IMR-90 (cell line): ENCODE measurements at regions of chr3 and their contacts with region 1.

Region 1: GRCh38 chr3:78258798-78259197 is 1218.9 kb downstream of the ROBO2 start:
- DNase-seq: peak; percentile 90
- ATAC-seq: peak; percentile 96
- H3K4me3 ChIP-seq: no peak overlapping the region
- H3K27ac ChIP-seq: peak overlapping the region; percentile 66; the same call in 1 of the 2 replicates
- H3K4me1 ChIP-seq: no peaks in the 10 kb centered on the region; the same call in none of the 2 replicates
- H3K27me3 ChIP-seq: no peaks in the 10 kb centered on the region
- CTCF ChIP-seq: no peak
- POLR2A ChIP-seq: no peak
- RAD21 ChIP-seq: no peak

Region 2: DNA sequence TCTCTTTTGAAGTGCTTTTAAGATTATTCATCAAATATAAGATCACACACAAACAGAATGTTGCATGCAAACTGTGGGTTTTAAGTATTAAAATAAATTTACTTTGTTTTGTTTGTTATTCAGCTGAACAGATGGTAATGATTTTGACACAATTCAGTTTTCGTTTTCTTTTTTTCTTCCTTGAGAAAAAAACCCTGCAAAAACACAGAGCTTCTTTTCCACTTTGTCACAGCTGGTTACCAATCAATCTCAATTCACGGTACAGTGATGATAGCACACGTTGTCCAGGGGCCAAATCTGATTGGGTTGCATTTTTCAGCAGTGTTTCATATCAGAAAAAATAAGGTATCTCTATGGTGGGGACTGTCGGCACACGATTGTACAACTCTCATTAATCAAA is 745.3 kb before region 1 on chr3:
- CTCF ChIA-PET with region 1: no interaction called
- POLR2A ChIA-PET with region 1: no interaction called
- dilution Hi-C with region 1: no loop called
- in situ Hi-C with region 1: no loop called
- intact Hi-C with region 1: no loop called
- DNase-seq: no peak
- ATAC-seq: no peak
- H3K4me3 ChIP-seq: no peak overlapping the region
- H3K27ac ChIP-seq: no peak overlapping the region
- H3K4me1 ChIP-seq: no peaks in the 10 kb centered on the region
- H3K27me3 ChIP-seq: no peaks in the 10 kb centered on the region
- CTCF ChIP-seq: no peak
- POLR2A ChIP-seq: no peak
- RAD21 ChIP-seq: no peak

Region 3: GRCh38 chr3:77780278-77780996 is 478.4 kb before region 1 on chr3:
- CTCF ChIA-PET with region 1: no interaction called
- POLR2A ChIA-PET with region 1: no interaction called
- dilution Hi-C with region 1: no loop called
- in situ Hi-C with region 1: no loop called
- intact Hi-C with region 1: no loop called
- DNase-seq: no peak
- ATAC-seq: no peak
- H3K4me3 ChIP-seq: no peak overlapping the region
- H3K27ac ChIP-seq: no peak overlapping the region
- H3K4me1 ChIP-seq: no peaks in the 10 kb centered on the region
- H3K27me3 ChIP-seq: no peaks in the 10 kb centered on the region
- CTCF ChIP-seq: no peak
- POLR2A ChIP-seq: no peak
- RAD21 ChIP-seq: no peak

Region 4: DNA sequence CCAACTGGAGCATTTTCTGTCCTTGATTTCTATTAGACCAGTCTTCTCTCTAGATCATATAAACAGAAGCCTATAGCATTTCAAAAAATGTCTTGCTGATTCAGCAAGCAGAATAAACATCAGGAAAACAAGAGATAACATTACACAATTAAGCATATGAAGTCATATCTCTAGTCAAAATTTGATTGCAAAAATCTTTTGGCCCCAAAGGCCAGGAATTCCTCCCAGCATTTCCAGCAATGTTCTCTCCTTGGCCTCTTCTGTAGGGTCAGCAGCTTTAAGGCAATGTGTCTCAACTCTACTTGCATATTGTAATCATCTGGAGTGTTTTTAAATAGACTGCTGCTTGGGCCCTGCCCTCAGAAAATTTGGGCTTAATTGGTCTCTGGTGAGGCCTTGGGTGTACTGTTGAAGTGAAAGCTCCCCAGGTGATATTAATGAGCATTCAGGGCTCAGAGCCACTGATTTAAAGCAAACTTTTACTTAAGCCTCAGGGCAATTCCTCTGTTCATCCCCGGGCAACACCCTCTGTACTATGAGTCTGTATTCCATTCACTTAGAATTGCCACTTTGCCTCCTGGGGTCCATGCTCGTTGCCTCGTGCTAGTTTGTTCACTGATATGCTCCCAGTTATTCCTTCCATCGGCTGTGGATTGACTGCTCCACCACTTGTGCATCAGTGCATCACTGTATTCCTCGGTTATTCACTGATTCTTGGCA is 146.3 kb before region 1 on chr3:
- CTCF ChIA-PET with region 1: no interaction called
- POLR2A ChIA-PET with region 1: no interaction called
- dilution Hi-C with region 1: no loop called
- in situ Hi-C with region 1: no loop called
- intact Hi-C with region 1: loop called (anchors 5 kb)
- DNase-seq: peak; percentile 47
- ATAC-seq: peak; percentile 88
- H3K4me3 ChIP-seq: no peak overlapping the region
- H3K27ac ChIP-seq: peak overlapping the region; percentile 92; the same call in 1 of the 2 replicates
- H3K4me1 ChIP-seq: peaks cover 11% of the 10 kb centered on the region
- H3K27me3 ChIP-seq: no peaks in the 10 kb centered on the region
- CTCF ChIP-seq: no peak
- POLR2A ChIP-seq: no peak
- RAD21 ChIP-seq: no peak

Region 5: DNA sequence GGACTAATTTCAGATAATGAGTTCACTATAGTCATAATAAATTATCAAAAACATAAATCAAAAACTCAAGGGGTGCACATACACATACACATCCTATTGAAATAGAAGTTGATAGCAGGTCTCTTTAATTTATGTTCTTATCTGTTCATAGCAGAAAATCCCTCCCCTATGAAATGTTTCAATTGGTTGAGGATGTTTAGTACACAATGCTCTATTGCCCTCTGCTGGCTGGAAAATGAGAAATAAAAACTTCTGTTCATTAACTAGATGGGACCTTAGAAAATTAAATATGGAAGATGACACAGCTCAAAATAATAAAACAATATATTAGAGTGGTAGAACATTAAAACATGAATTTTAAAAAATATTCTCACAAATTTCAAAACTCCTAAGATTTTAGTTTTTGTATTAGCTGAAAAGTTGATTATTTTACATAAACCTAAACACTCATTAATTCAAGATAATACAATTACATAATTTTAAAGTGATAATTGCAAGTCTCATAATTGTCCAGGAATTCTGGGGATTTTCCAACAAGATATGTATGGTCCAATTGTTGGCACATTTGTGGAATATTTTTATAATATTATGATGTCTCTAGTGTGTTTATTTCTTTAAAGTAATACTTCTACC is 774.0 kb after region 1 on chr3:
- CTCF ChIA-PET with region 1: no interaction called
- POLR2A ChIA-PET with region 1: no interaction called
- dilution Hi-C with region 1: no loop called
- in situ Hi-C with region 1: loop called (anchors 25 kb)
- intact Hi-C with region 1: no loop called
- DNase-seq: peak; percentile 67
- ATAC-seq: peak; percentile 52; the same call in 1 of the 2 replicates
- H3K4me3 ChIP-seq: no peak overlapping the region
- H3K27ac ChIP-seq: no peak overlapping the region
- H3K4me1 ChIP-seq: peaks cover 2% of the 10 kb centered on the region; the same call in 1 of the 2 replicates
- H3K27me3 ChIP-seq: no peaks in the 10 kb centered on the region
- CTCF ChIP-seq: peak; percentile 69
- POLR2A ChIP-seq: no peak
- RAD21 ChIP-seq: peak; percentile 79